CD4-positive, alpha-beta T cell (primary cell): ENCODE measurements at regions of chr1 and their contacts with region 1.

Region 1: GRCh38 chr1:28914228-28915030 is at the start of gene EPB41:
- DNase-seq: peak; percentile 79 to 97 (median 93)
- ATAC-seq: peak; percentile 76
- H3K4me3 ChIP-seq: peak within 1 kb of the TSS; percentile 70
- H3K4me3 Mint-ChIP-seq: peak within 1 kb of the TSS; percentile 90
- H3K27ac ChIP-seq: peak within 1 kb of the TSS; percentile 73 to 76
- H3K27ac Mint-ChIP-seq: peak within 1 kb of the TSS; percentile 93
- H3K4me1 ChIP-seq: peaks cover 39% of the 10 kb centered on the region
- H3K4me1 Mint-ChIP-seq: peaks cover 53% of the 10 kb centered on the region
- H3K27me3 ChIP-seq: no peaks in the 10 kb centered on the region
- H3K27me3 Mint-ChIP-seq: no peaks in the 10 kb centered on the region
- CTCF ChIP-seq: no peak
- total RNA-seq, gene EPB41: 138 to 145 TPM

Region 2: GRCh38 chr1:28470146-28470545 is 444.3 kb before region 1 on chr1:
- CTCF ChIA-PET with region 1: no interaction called
- POLR2A ChIA-PET with region 1: no interaction called
- intact Hi-C with region 1: no loop called
- DNase-seq: no peak
- ATAC-seq: no peak
- H3K4me3 ChIP-seq: no peak overlapping the region
- H3K4me3 Mint-ChIP-seq: no peak overlapping the region
- H3K27ac ChIP-seq: no peak overlapping the region
- H3K27ac Mint-ChIP-seq: no peak overlapping the region
- H3K4me1 ChIP-seq: no peaks in the 10 kb centered on the region
- H3K4me1 Mint-ChIP-seq: no peaks in the 10 kb centered on the region
- H3K27me3 ChIP-seq: no peaks in the 10 kb centered on the region
- H3K27me3 Mint-ChIP-seq: no peaks in the 10 kb centered on the region
- CTCF ChIP-seq: no peak

Region 3: GRCh38 chr1:28886731-28887418 is 27.6 kb before region 1 on chr1:
- CTCF ChIA-PET with region 1: interaction called, 9 read pairs
- POLR2A ChIA-PET with region 1: interaction called, 30 read pairs
- intact Hi-C with region 1: loop called in 1 of 2 experiments (anchors 1 kb)
- DNase-seq: peak; percentile 81 to 95 (median 89)
- ATAC-seq: peak; percentile 73
- H3K4me3 ChIP-seq: peak overlapping the region; percentile 99
- H3K4me3 Mint-ChIP-seq: peak overlapping the region; percentile 95
- H3K27ac ChIP-seq: peak overlapping the region; percentile 57 to 76
- H3K27ac Mint-ChIP-seq: peak overlapping the region; percentile 84
- H3K4me1 ChIP-seq: peaks cover 68% of the 10 kb centered on the region
- H3K4me1 Mint-ChIP-seq: peaks cover 51% of the 10 kb centered on the region
- H3K27me3 ChIP-seq: no peaks in the 10 kb centered on the region
- H3K27me3 Mint-ChIP-seq: peaks cover 5% of the 10 kb centered on the region
- CTCF ChIP-seq: no peak

Region 4: DNA sequence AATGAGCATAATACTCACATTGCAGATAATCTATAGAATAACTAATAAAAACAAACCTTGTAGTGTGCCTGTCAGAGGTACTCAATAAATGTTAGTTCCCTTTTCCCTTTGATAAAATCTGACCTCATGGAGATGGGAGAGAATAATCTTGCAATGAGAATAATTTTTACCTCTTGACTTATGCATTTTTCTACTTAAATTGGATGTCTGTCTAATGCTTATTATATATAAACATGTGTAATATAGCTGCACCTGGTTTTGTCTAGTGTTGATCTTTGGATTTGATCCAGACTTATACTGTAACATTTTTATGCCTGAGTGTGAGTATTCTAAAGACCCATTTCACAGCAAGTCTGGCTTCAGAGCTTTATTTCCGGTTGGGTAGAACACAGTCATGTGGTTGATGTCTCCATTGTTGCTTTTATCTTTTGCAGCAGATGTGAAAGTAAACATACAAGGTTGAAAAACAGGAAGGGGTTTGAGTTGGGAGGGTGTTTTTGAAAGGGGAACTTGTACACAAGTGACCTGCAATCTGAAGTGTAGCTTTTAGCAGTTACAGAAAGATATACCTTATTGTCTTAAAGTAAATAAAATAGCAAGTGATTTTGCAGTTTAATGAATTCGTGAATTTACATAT is 12.3 kb after region 1 on chr1:
- CTCF ChIA-PET with region 1: no interaction called
- POLR2A ChIA-PET with region 1: interaction called, 110 read pairs
- intact Hi-C with region 1: loop called (anchors 1 kb)
- DNase-seq: peak in 8 of 14 experiments; percentile 28 to 92 (median 40)
- ATAC-seq: peak; percentile 82
- H3K4me3 ChIP-seq: peak overlapping the region; percentile 32
- H3K4me3 Mint-ChIP-seq: peak overlapping the region; percentile 78
- H3K27ac ChIP-seq: peak overlapping the region; percentile 71 to 75
- H3K27ac Mint-ChIP-seq: peak overlapping the region; percentile 85
- H3K4me1 ChIP-seq: peaks cover 68% of the 10 kb centered on the region
- H3K4me1 Mint-ChIP-seq: peaks cover 67% of the 10 kb centered on the region
- H3K27me3 ChIP-seq: no peaks in the 10 kb centered on the region
- H3K27me3 Mint-ChIP-seq: no peaks in the 10 kb centered on the region
- CTCF ChIP-seq: no peak

Region 5: DNA sequence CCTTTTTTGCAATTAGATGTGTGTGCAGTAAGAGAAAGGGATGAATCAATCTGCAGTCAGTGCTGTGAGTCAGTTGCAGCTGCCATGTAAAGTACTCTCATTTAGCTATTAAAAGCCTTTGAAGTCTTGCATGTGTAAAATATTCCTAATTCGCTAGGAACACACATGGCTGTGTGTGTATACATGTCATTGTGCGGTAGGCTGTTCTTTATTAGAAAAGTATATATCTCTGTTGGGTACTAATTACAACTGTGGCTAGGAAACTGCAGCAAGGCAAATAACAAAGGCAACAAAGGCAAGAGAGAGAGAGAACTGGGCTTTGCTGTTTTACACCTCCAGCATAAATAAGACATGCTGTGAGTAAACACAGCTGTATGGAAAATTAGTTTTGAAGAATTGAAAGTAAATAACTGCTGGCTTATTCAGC is 41.6 kb after region 1 on chr1:
- CTCF ChIA-PET with region 1: interaction called, 3 read pairs
- POLR2A ChIA-PET with region 1: interaction called, 8 read pairs
- intact Hi-C with region 1: loop called in 1 of 2 experiments (anchors 5 kb)
- DNase-seq: no peak
- ATAC-seq: no peak
- H3K4me3 ChIP-seq: no peak overlapping the region
- H3K4me3 Mint-ChIP-seq: no peak overlapping the region
- H3K27ac ChIP-seq: no peak overlapping the region
- H3K27ac Mint-ChIP-seq: peak overlapping the region; percentile 40
- H3K4me1 ChIP-seq: peaks cover 28% of the 10 kb centered on the region
- H3K4me1 Mint-ChIP-seq: peaks cover 77% of the 10 kb centered on the region
- H3K27me3 ChIP-seq: no peaks in the 10 kb centered on the region
- H3K27me3 Mint-ChIP-seq: no peaks in the 10 kb centered on the region
- CTCF ChIP-seq: no peak

Region 6: GRCh38 chr1:28971980-28972771 is 57.7 kb after region 1 on chr1:
- CTCF ChIA-PET with region 1: no interaction called
- POLR2A ChIA-PET with region 1: interaction called, 4 read pairs
- intact Hi-C with region 1: loop called (anchors 5 kb)
- DNase-seq: peak in 2 of 14 experiments; percentile 12 to 20
- ATAC-seq: no peak
- H3K4me3 ChIP-seq: no peak overlapping the region
- H3K4me3 Mint-ChIP-seq: no peak overlapping the region
- H3K27ac ChIP-seq: no peak overlapping the region
- H3K27ac Mint-ChIP-seq: peak overlapping the region; percentile 21
- H3K4me1 ChIP-seq: peaks cover 18% of the 10 kb centered on the region
- H3K4me1 Mint-ChIP-seq: peaks cover 66% of the 10 kb centered on the region
- H3K27me3 ChIP-seq: no peaks in the 10 kb centered on the region
- H3K27me3 Mint-ChIP-seq: no peaks in the 10 kb centered on the region
- CTCF ChIP-seq: no peak